ENCODE measurements at regions of chr4 and their contacts with region 1.

Region 1: GRCh38 chr4:2220016-2220630 is 21.8 kb downstream of the HAUS3 start:
- DNase-seq: peak; percentile 66
- H3K4me3 ChIP-seq: no peak overlapping the region
- H3K27ac ChIP-seq: no peak overlapping the region
- H3K4me1 ChIP-seq: no peaks in the 10 kb centered on the region
- H3K27me3 ChIP-seq: no peaks in the 10 kb centered on the region
- CTCF ChIP-seq: peak; percentile 84 to 85
- POLR2A ChIP-seq: no peak

Region 2: GRCh38 chr4:2241410-2242353 is 21.6 kb after region 1 on chr4 and contains the starts of genes HAUS3 and POLN:
- CTCF ChIA-PET with region 1: interaction called, 49 read pairs
- POLR2A ChIA-PET with region 1: no interaction called
- dilution Hi-C with region 1: no loop called
- intact Hi-C with region 1: no loop called
- DNase-seq: peak; percentile 98
- H3K4me3 ChIP-seq: peak within 1 kb of the TSS; percentile 63 to 97 (median 97)
- H3K27ac ChIP-seq: peak within 1 kb of the TSS; percentile 30
- H3K4me1 ChIP-seq: peaks cover 33% of the 10 kb centered on the region
- H3K27me3 ChIP-seq: no peaks in the 10 kb centered on the region
- CTCF ChIP-seq: no peak
- POLR2A ChIP-seq: peak; percentile 72
- total RNA-seq, gene HAUS3: 15.9 and 16.0 TPM in 2 replicates
- total RNA-seq, gene POLN: 3.1 and 4.2 TPM in 2 replicates

Region 3: DNA sequence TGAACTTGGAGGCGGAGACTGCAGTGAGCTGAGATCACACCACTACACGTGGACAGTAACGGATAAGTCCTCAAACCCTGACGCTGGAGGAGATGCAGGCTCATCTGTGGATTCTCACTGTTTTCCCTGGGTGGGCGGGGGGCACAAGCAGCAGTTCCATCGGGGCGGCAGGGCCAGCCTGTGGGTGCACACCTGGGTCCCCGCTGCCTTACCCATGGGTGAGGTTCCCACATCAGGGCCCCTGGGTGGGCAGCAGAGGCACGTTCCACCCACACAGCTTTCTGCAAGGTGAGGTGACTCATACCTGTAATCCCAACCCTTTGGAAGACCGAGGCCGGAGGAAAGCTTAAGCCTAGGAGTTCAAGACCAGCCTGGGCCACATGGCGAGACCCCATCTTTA is 98.4 kb after region 1 on chr4:
- CTCF ChIA-PET with region 1: no interaction called
- POLR2A ChIA-PET with region 1: no interaction called
- dilution Hi-C with region 1: no loop called
- intact Hi-C with region 1: no loop called
- DNase-seq: no peak
- H3K4me3 ChIP-seq: no peak overlapping the region
- H3K27ac ChIP-seq: no peak overlapping the region
- H3K4me1 ChIP-seq: no peaks in the 10 kb centered on the region
- H3K27me3 ChIP-seq: no peaks in the 10 kb centered on the region
- CTCF ChIP-seq: no peak
- POLR2A ChIP-seq: no peak

Region 4: DNA sequence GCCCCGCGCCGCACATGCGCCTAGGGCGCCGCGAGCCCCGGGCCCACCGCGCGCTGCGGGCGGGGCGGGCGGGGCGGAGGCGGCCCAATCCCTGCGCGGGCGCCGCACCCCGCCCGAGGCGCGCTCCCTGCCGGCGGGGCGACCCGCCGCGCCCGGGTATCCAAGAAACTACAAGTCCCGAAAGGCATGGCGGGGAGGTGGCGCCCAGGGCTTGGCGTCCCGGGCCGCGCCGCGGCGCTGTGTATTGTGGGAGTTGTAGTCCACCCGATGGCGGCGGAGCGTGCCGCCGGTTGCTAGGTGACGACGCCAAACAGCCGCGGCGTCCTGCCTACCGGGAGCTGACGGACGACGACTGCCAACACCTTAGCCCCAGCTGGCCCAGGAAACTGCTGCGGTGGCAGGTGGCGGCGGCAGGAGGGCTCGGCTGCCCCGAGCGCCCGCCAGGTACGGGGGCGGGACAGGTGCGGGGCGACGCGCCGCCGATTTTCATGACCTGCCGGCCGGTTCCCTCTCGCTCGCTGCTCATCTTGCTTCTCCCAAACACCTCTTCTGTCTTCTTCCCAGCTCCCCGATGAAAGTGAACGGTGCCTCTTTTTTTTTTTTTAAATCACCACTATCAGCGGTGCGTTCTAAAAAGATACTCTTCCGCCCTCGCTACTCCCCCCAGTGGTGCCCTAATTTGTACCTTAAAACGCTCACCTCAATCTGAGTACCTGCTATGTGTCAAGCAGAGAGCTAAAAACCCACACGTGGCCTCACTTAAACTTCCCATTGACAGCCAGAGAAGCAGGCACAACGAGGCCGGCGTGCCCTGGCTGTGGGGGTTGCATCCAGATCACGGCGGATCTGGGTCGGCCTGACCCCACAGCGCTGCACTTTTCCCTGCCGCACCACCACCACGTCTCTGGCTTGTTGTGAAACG is 198.8 kb after region 1 on chr4 and contains the start of gene CFAP99:
- CTCF ChIA-PET with region 1: interaction called, 10 read pairs
- POLR2A ChIA-PET with region 1: no interaction called
- dilution Hi-C with region 1: no loop called
- intact Hi-C with region 1: no loop called
- DNase-seq: peak; percentile 93
- H3K4me3 ChIP-seq: peak within 1 kb of the TSS; percentile 62 to 78 (median 66)
- H3K27ac ChIP-seq: peak within 1 kb of the TSS; percentile 13
- H3K4me1 ChIP-seq: peaks cover 33% of the 10 kb centered on the region
- H3K27me3 ChIP-seq: peaks cover 19 to 21% of the 10 kb centered on the region in 2 experiments
- CTCF ChIP-seq: peak in 1 of 2 donors; percentile 26
- POLR2A ChIP-seq: no peak
- total RNA-seq, gene CFAP99: 0.12 TPM in 1 of 2 replicates, not detected in the other

Region 5: GRCh38 chr4:2462218-2462991 is 242.3 kb after region 1 on chr4:
- CTCF ChIA-PET with region 1: interaction called, 30 read pairs
- POLR2A ChIA-PET with region 1: no interaction called
- dilution Hi-C with region 1: no loop called
- intact Hi-C with region 1: loop called (anchors 1 kb)
- DNase-seq: peak; percentile 75
- H3K4me3 ChIP-seq: peak overlapping the region in 2 of 3 experiments; percentile 20 to 29
- H3K27ac ChIP-seq: no peak overlapping the region
- H3K4me1 ChIP-seq: peaks cover 7% of the 10 kb centered on the region
- H3K27me3 ChIP-seq: no peaks in the 10 kb centered on the region
- CTCF ChIP-seq: peak; percentile 37 to 48
- POLR2A ChIP-seq: no peak

Region 6: GRCh38 chr4:3402491-3403347 is 1182.6 kb after region 1 on chr4:
- CTCF ChIA-PET with region 1: no interaction called
- POLR2A ChIA-PET with region 1: no interaction called
- dilution Hi-C with region 1: no loop called
- intact Hi-C with region 1: no loop called
- DNase-seq: no peak
- H3K4me3 ChIP-seq: no peak overlapping the region
- H3K27ac ChIP-seq: no peak overlapping the region
- H3K4me1 ChIP-seq: peaks cover 3% of the 10 kb centered on the region
- H3K27me3 ChIP-seq: no peaks in the 10 kb centered on the region
- CTCF ChIP-seq: no peak
- POLR2A ChIP-seq: no peak